Naive thymus-derived CD4-positive, alpha-beta T cell (primary cell): ENCODE measurements at regions of chr4 and their contacts with region 1.

Region 1: DNA sequence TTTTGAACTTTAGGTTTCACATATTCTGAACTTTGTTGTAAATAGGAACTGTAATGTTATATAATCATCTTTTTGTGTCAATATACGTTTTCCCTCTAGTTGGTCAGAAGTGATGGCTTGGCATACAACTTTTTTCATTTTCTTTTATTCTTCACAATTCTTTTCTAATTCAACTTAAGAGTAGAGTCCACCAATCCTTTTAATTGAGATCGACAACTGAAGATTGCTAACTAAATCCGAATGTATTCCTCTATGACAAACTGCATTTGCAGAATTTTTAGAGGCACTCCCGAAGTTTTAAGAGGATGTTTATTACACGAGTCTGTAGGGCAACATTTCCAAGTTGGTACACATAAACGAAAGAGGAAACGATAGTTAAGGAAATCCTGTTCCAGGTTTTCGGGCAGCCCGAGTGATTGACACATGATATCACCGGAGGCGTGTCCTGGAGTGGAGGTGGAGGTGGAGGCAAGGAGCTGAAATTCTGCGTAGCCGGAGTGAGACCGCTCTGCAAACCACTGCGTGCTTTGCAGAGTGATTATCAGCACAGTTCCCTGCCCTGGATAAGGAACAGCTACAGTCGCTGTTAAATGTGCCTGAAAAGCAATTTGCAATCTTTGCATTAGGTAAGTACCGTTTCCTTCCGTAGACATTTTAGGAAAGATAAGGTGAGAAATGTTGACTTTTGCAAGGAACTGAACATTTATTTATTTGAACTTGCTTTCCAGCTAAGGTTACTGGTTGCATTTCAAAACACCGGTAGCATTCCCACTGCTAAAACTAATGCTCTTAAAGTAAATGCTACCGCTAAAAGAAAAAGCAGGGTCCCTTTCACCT is at the start of gene SPRY1:
- DNase-seq: peak; percentile 22 to 81 (median 72)
- ATAC-seq: peak; percentile 72
- H3K4me3 ChIP-seq: peak within 1 kb of the TSS; percentile 69
- H3K4me3 Mint-ChIP-seq: peak within 1 kb of the TSS; percentile 81 to 92 (median 88)
- H3K27ac ChIP-seq: peak within 1 kb of the TSS; percentile 52
- H3K27ac Mint-ChIP-seq: peak within 1 kb of the TSS; percentile 13 to 91 (median 70)
- H3K4me1 ChIP-seq: peaks cover 0 to 17% of the 10 kb centered on the region in 2 donors
- H3K4me1 Mint-ChIP-seq: peaks cover 14 to 33% (median 19%) of the 10 kb centered on the region in 7 donors
- H3K27me3 ChIP-seq: no peaks in the 10 kb centered on the region
- H3K27me3 Mint-ChIP-seq: peaks cover 11 to 33% (median 17%) of the 10 kb centered on the region in 5 donors
- total RNA-seq, gene SPRY1: 2.5 to 20.5 (median 6.2) TPM

Region 2: GRCh38 chr4:121800961-121801714 is 1595.4 kb before region 1 on chr4 and contains the start of gene EXOSC9:
- CTCF ChIA-PET with region 1: no interaction called
- POLR2A ChIA-PET with region 1: no interaction called
- intact Hi-C with region 1: loop called (anchors 5 to 10 kb)
- DNase-seq: peak; percentile 88 to 98 (median 95)
- ATAC-seq: peak; percentile 92
- H3K4me3 ChIP-seq: peak within 1 kb of the TSS; percentile 92
- H3K4me3 Mint-ChIP-seq: peak within 1 kb of the TSS; percentile 89 to 99 (median 95)
- H3K27ac ChIP-seq: peak within 1 kb of the TSS; percentile 93
- H3K27ac Mint-ChIP-seq: peak within 1 kb of the TSS; percentile 97 to 100 (median 99)
- H3K4me1 ChIP-seq: peaks cover 16 to 20% of the 10 kb centered on the region in 2 donors
- H3K4me1 Mint-ChIP-seq: peaks cover 26 to 55% (median 50%) of the 10 kb centered on the region in 7 donors
- H3K27me3 ChIP-seq: no peaks in the 10 kb centered on the region
- H3K27me3 Mint-ChIP-seq: peaks cover 0 to 2% (median 0%) of the 10 kb centered on the region in 5 donors
- total RNA-seq, gene EXOSC9: 37.5 to 55.0 (median 44.2) TPM

Region 3: GRCh38 chr4:122732329-122733026 is 664.0 kb before region 1 on chr4 and contains the start of gene BBS12:
- CTCF ChIA-PET with region 1: no interaction called
- POLR2A ChIA-PET with region 1: no interaction called
- intact Hi-C with region 1: loop called (anchors 1 to 2 kb)
- DNase-seq: peak; percentile 90 to 99 (median 99)
- ATAC-seq: peak; percentile 99
- H3K4me3 ChIP-seq: peak within 1 kb of the TSS; percentile 97
- H3K4me3 Mint-ChIP-seq: peak within 1 kb of the TSS; percentile 80 to 100 (median 97)
- H3K27ac ChIP-seq: peak within 1 kb of the TSS; percentile 74
- H3K27ac Mint-ChIP-seq: peak within 1 kb of the TSS; percentile 92 to 99 (median 98)
- H3K4me1 ChIP-seq: peaks cover 9 to 17% of the 10 kb centered on the region in 2 donors
- H3K4me1 Mint-ChIP-seq: peaks cover 6 to 44% (median 36%) of the 10 kb centered on the region in 7 donors
- H3K27me3 ChIP-seq: no peaks in the 10 kb centered on the region
- H3K27me3 Mint-ChIP-seq: no peaks in the 10 kb centered on the region
- total RNA-seq, gene BBS12: 0.71 to 4.3 (median 2.3) TPM

Region 4: DNA sequence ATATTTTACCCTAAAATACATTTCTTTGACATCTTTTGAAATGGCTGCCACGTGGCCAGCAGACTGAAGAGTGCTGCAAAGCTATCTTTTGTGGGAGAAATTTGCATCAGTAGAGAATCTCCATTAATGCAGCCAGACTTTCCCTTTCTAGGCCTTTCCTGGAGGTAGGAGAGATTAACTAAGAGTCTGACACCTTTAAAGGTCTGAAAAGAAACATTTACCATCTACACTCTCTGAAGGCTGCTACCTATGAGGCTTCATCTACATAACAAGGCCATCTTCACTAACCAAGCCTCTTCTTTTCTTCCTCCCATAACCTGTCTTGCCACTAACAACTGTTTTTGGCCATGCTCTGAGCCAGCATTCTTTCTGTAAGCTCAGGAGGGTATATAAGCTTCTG is 17.7 kb before region 1 on chr4:
- CTCF ChIA-PET with region 1: no interaction called
- POLR2A ChIA-PET with region 1: no interaction called
- intact Hi-C with region 1: no loop called
- DNase-seq: no peak
- ATAC-seq: no peak
- H3K4me3 ChIP-seq: no peak overlapping the region
- H3K4me3 Mint-ChIP-seq: no peak overlapping the region
- H3K27ac ChIP-seq: no peak overlapping the region
- H3K27ac Mint-ChIP-seq: no peak overlapping the region
- H3K4me1 ChIP-seq: no peaks in the 10 kb centered on the region
- H3K4me1 Mint-ChIP-seq: no peaks in the 10 kb centered on the region
- H3K27me3 ChIP-seq: no peaks in the 10 kb centered on the region
- H3K27me3 Mint-ChIP-seq: peaks cover 11 to 36% (median 17%) of the 10 kb centered on the region in 5 donors

Region 5: GRCh38 chr4:123421937-123422781 is 25.6 kb after region 1 on chr4:
- CTCF ChIA-PET with region 1: no interaction called
- POLR2A ChIA-PET with region 1: no interaction called
- intact Hi-C with region 1: loop called in 1 of 2 experiments (anchors 1 kb)
- DNase-seq: no peak
- ATAC-seq: peak; percentile 49
- H3K4me3 ChIP-seq: peak overlapping the region; percentile 14
- H3K4me3 Mint-ChIP-seq: peak overlapping the region; percentile 35 to 86 (median 72)
- H3K27ac ChIP-seq: peak overlapping the region; percentile 58
- H3K27ac Mint-ChIP-seq: peak overlapping the region in 6 of 9 donors; percentile 32 to 95 (median 63)
- H3K4me1 ChIP-seq: no peaks in the 10 kb centered on the region
- H3K4me1 Mint-ChIP-seq: peaks cover 5 to 66% (median 12%) of the 10 kb centered on the region in 7 donors
- H3K27me3 ChIP-seq: no peaks in the 10 kb centered on the region
- H3K27me3 Mint-ChIP-seq: peaks cover 0 to 8% (median 0%) of the 10 kb centered on the region in 5 donors

Region 6: GRCh38 chr4:123505095-123506010 is 108.8 kb after region 1 on chr4:
- CTCF ChIA-PET with region 1: no interaction called
- POLR2A ChIA-PET with region 1: no interaction called
- intact Hi-C with region 1: loop called in 1 of 2 experiments (anchors 5 kb)
- DNase-seq: peak in 1 of 9 donors; percentile 29
- ATAC-seq: peak; percentile 54
- H3K4me3 ChIP-seq: peak overlapping the region; percentile 24
- H3K4me3 Mint-ChIP-seq: peak overlapping the region; percentile 68 to 89 (median 79)
- H3K27ac ChIP-seq: no peak overlapping the region
- H3K27ac Mint-ChIP-seq: peak overlapping the region in 1 of 9 donors; percentile 76
- H3K4me1 ChIP-seq: no peaks in the 10 kb centered on the region
- H3K4me1 Mint-ChIP-seq: peaks cover 0 to 12% (median 10%) of the 10 kb centered on the region in 7 donors
- H3K27me3 ChIP-seq: no peaks in the 10 kb centered on the region
- H3K27me3 Mint-ChIP-seq: peaks cover 36 to 55% (median 48%) of the 10 kb centered on the region in 5 donors

Region 7: DNA sequence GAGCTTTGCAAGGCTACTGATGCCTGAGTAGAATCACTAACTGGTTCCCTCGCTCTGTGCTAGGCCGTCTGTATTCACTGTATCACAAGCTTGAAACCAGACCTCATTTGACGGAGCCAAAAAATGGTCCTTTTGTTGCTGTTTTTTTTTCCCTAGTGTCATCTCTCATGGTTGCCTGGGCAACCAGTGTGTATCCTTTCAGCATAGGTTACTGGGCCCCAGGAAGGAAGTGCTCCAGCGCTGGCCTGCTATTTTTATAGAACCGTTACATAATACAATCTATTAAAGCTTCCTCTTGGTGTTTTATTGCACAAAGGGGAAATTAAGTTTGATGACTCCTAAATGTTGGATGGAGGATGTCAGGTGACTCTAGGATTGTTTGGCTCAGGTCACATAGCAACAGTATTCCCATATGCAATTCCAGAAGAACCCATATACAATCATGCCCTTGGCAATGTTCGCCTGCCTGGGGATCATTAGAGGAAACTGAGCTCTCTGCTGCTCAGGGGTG is 220.5 kb after region 1 on chr4:
- CTCF ChIA-PET with region 1: interaction called, 3 read pairs
- POLR2A ChIA-PET with region 1: no interaction called
- intact Hi-C with region 1: loop called (anchors 1 to 2 kb)
- DNase-seq: peak in 7 of 9 donors; percentile 34 to 75 (median 62)
- ATAC-seq: peak; percentile 94
- H3K4me3 ChIP-seq: no peak overlapping the region
- H3K4me3 Mint-ChIP-seq: peak overlapping the region in 7 of 10 donors; percentile 16 to 64 (median 41)
- H3K27ac ChIP-seq: peak overlapping the region; percentile 8
- H3K27ac Mint-ChIP-seq: peak overlapping the region; percentile 37 to 92 (median 73)
- H3K4me1 ChIP-seq: peaks cover 12% of the 10 kb centered on the region in 2 donors
- H3K4me1 Mint-ChIP-seq: peaks cover 5 to 21% (median 17%) of the 10 kb centered on the region in 7 donors
- H3K27me3 ChIP-seq: no peaks in the 10 kb centered on the region
- H3K27me3 Mint-ChIP-seq: peaks cover 0 to 16% (median 0%) of the 10 kb centered on the region in 5 donors

Region 8: GRCh38 chr4:124712372-124713184 is 1316.1 kb after region 1 on chr4 and contains the start of gene ANKRD50:
- CTCF ChIA-PET with region 1: no interaction called
- POLR2A ChIA-PET with region 1: no interaction called
- intact Hi-C with region 1: loop called in 1 of 2 experiments (anchors 5 kb)
- DNase-seq: peak; percentile 53 to 75 (median 68)
- ATAC-seq: peak; percentile 84
- H3K4me3 ChIP-seq: peak within 1 kb of the TSS; percentile 57
- H3K4me3 Mint-ChIP-seq: peak within 1 kb of the TSS in 7 of 10 donors; percentile 77 to 94 (median 93)
- H3K27ac ChIP-seq: peak within 1 kb of the TSS; percentile 56
- H3K27ac Mint-ChIP-seq: peak within 1 kb of the TSS in 8 of 9 donors; percentile 47 to 93 (median 84)
- H3K4me1 ChIP-seq: peaks cover 4 to 7% of the 10 kb centered on the region in 2 donors
- H3K4me1 Mint-ChIP-seq: peaks cover 4 to 9% (median 6%) of the 10 kb centered on the region in 7 donors
- H3K27me3 ChIP-seq: no peaks in the 10 kb centered on the region
- H3K27me3 Mint-ChIP-seq: peaks cover 0 to 22% (median 4%) of the 10 kb centered on the region in 5 donors
- total RNA-seq, gene ANKRD50: 0.15 to 3.5 (median 0.65) TPM